ENCODE measurements at regions of chrX and their contacts with region 1.

Region 1: DNA sequence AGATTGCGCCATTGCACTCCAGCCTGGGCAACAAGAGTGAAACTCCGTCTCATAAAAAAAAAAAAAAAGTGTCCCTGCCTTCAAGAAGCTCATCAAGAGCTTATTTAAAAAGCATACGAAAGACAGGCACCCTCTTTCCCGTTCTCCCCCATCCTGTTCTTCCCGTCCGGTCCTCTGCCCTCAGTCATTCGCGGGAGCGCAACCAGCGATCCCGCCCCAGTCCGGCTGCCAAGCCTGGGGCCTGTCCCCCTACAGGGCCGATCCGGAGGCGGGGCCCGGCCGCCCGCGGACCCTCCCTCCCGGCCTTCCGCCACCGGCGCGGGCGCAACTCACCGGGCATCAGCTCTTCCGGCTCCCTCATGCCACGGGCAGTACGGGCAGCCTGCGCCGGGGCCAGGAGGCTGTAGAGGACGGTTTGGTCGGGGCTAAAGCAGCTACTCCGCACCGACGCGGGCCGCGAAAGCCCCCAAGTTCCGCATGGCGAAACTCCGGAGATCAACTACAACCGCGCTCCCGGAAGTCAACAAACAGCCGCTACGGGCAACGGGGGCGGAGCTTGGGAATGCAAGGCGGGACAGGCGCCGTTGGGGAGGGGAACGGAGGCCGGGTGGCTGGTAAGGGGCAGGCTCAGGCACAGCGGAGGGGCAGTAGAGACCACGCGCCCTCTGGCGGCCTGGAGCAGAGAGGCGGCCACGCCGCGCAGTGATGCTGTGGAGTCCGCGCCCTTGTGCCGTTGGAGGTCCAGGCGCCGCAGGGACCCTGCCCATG is at the start of gene RPGR:
- DNase-seq: peak; percentile 78 to 96
- ATAC-seq: peak; percentile 97 to 98
- H3K4me3 ChIP-seq: peak within 1 kb of the TSS; percentile 51
- H3K27ac ChIP-seq: peak within 1 kb of the TSS; percentile 96 to 97
- H3K4me1 ChIP-seq: peaks cover 8% of the 10 kb centered on the region; the same call in 1 of the 3 replicates
- CTCF ChIP-seq: peak; percentile 66
- EP300 ChIP-seq: no peak
- POLR2A ChIP-seq: peak; percentile 50
- RAD21 ChIP-seq: peak; percentile 69 to 76
- polyA plus RNA-seq, gene RPGR: 7.7 and 10.5 TPM in 2 replicates

Region 2: DNA sequence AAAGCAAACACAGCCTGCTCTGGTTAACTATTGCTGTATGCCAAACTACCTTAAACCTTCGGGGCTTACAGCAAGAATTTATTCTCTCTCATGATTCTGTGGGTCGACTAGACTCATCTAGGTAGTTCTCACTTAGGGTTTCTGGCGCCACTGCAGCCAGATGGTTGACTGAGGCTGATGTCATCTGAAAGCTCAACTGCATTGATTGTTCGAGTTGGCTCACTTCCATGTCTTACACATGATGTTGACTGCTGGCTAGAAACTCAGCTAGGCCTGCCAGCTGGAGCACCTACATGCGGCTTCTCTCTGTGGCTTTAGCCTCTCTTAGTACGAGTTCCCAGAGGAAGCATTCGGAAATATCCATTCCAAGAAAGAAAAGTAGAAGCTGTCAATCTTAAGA is 209.7 kb before region 1 on chrX:
- CTCF ChIA-PET with region 1: no interaction called
- POLR2A ChIA-PET with region 1: no interaction called
- DNase-seq: no peak
- ATAC-seq: no peak
- H3K4me3 ChIP-seq: no peak overlapping the region
- H3K27ac ChIP-seq: no peak overlapping the region
- H3K4me1 ChIP-seq: no peaks in the 10 kb centered on the region
- CTCF ChIP-seq: no peak
- EP300 ChIP-seq: no peak
- POLR2A ChIP-seq: no peak
- RAD21 ChIP-seq: no peak

Region 3: GRCh38 chrX:38192007-38192810 is 135.0 kb before region 1 on chrX:
- CTCF ChIA-PET with region 1: interaction called, 39 read pairs
- POLR2A ChIA-PET with region 1: interaction called, 4 read pairs
- DNase-seq: peak in 1 of 2 experiments; percentile 14
- ATAC-seq: peak; percentile 54 to 74; a peak in 3 of 6 replicates
- H3K4me3 ChIP-seq: no peak overlapping the region
- H3K27ac ChIP-seq: no peak overlapping the region
- H3K4me1 ChIP-seq: no peaks in the 10 kb centered on the region
- CTCF ChIP-seq: peak; percentile 48
- EP300 ChIP-seq: no peak
- POLR2A ChIP-seq: no peak
- RAD21 ChIP-seq: peak; percentile 50 to 54

Region 4: DNA sequence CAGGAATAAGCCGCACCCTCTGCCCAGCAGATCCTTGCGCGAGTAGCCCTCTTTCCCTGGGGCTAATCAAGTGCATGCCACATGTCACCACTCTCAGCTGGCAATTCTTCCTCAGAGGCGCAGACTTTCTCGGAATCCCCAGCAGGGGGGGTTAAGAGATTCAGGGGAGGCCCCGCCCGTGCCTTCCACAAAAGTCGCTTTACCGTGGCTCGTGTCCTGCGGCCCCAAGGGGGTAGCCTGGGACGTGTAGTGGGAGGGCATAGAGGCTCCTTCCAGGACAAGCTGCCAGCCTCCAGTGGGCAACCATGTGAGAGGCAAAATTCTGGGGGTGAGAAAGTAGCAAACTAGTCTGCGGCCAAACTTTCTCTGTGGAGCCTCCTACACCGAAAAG is 107.2 kb before region 1 on chrX:
- CTCF ChIA-PET with region 1: interaction called, 25 read pairs
- POLR2A ChIA-PET with region 1: interaction called, 3 read pairs
- DNase-seq: peak; percentile 21 to 52
- ATAC-seq: peak; percentile 77 to 83
- H3K4me3 ChIP-seq: peak overlapping the region; percentile 45
- H3K27ac ChIP-seq: peak overlapping the region in 1 of 2 experiments; percentile 75; a peak in 3 of 6 replicates
- H3K4me1 ChIP-seq: peaks cover 7% of the 10 kb centered on the region; the same call in 1 of the 3 replicates
- CTCF ChIP-seq: no peak; the same call in 2 of the 3 replicates
- EP300 ChIP-seq: no peak
- POLR2A ChIP-seq: no peak
- RAD21 ChIP-seq: peak; percentile 9 to 31; a peak in 1 of 5 replicates

Region 5: DNA sequence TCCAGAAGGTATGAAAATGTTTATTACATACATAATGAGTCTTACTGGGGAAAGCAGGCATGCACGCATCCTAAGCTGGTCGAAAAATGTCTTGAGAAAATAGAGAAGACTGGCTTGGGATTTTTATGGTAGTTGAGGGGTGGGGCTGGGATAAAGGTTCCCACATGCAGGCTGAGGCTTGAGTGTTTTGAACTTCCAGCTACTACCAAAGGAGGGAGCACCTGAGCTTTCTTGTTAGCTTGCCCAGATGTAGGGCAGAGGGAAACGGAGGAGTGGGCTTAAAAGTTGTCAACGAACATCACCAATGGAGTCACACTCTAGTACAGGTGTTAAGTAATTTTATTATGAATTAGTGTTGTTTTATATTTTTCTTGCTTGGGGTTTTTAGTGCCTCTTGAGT is 67.0 kb before region 1 on chrX:
- CTCF ChIA-PET with region 1: interaction called, 14 read pairs
- POLR2A ChIA-PET with region 1: interaction called, 4 read pairs
- DNase-seq: peak; percentile 43 to 49
- ATAC-seq: peak; percentile 66 to 88; a peak in 4 of 6 replicates
- H3K4me3 ChIP-seq: no peak overlapping the region
- H3K27ac ChIP-seq: no peak overlapping the region
- H3K4me1 ChIP-seq: no peaks in the 10 kb centered on the region
- CTCF ChIP-seq: peak; percentile 47
- EP300 ChIP-seq: no peak
- POLR2A ChIP-seq: no peak
- RAD21 ChIP-seq: peak; percentile 53 to 55

Region 6: DNA sequence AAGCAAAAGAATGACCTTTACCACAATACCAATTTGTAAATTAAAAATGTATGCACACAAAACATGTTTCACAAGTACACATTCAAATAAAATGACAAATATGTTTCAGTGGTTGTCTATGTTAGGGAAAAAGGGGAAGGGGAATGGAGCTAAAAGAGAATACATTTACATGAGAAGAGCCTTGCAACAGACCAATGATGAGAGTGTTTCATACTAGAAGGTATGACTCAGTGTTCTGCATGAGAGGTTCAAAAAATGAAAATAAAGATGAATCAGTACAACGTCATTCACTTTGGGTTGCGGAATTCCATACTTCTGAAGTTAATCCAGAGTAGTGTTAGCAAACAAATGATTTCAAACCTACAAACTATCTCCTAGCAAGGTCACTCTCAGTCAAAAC is 51.6 kb before region 1 on chrX:
- CTCF ChIA-PET with region 1: interaction called, 17 read pairs
- POLR2A ChIA-PET with region 1: interaction called, 4 read pairs
- DNase-seq: peak; percentile 18 to 76
- ATAC-seq: peak; percentile 96 to 99
- H3K4me3 ChIP-seq: no peak overlapping the region
- H3K27ac ChIP-seq: peak overlapping the region; percentile 39 to 72; a peak in 2 of 6 replicates
- H3K4me1 ChIP-seq: peaks cover 58% of the 10 kb centered on the region
- CTCF ChIP-seq: no peak
- EP300 ChIP-seq: no peak
- POLR2A ChIP-seq: no peak
- RAD21 ChIP-seq: no peak

Region 7: DNA sequence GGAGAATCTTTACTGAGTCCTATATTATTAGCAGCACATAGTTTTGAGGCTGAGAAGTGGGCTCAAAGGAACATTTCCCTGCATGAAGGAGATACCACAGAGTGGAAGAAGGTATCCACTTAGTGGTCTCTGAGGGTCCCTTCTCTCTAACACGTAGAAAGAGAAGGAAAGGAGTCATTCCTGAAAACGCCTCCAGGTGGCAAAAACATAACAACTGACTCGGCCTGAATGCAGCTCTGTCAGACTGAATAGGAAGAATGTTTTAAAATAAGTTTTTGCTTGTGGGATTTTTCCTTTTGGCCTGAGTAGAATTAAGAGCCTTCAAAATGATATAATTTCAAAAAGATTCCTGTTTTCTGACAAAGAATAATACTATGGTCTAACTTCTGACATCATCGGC is 23.2 kb before region 1 on chrX:
- CTCF ChIA-PET with region 1: interaction called, 22 read pairs
- POLR2A ChIA-PET with region 1: interaction called, 4 read pairs
- DNase-seq: peak in 1 of 2 experiments; percentile 22
- ATAC-seq: peak in 1 of 2 experiments; percentile 79; a peak in 3 of 6 replicates
- H3K4me3 ChIP-seq: no peak overlapping the region
- H3K27ac ChIP-seq: no peak overlapping the region
- H3K4me1 ChIP-seq: no peaks in the 10 kb centered on the region
- CTCF ChIP-seq: no peak
- EP300 ChIP-seq: no peak
- POLR2A ChIP-seq: no peak
- RAD21 ChIP-seq: no peak

Measured in A549 (cell line).